Heart right ventricle (tissue), 16 donors: ENCODE measurements at regions of chr11 and their contacts with region 1.

Region 1: GRCh38 chr11:115324581-115325432 is 179.4 kb downstream of the CADM1 start:
- DNase-seq: peak in 1 of 2 donors; percentile 16
- ATAC-seq: peak; percentile 49 to 91 (median 71)
- H3K4me3 ChIP-seq: peak overlapping the region in 2 of 10 donors; percentile 17 to 22
- H3K27ac ChIP-seq: no peak overlapping the region
- H3K4me1 ChIP-seq: peaks cover 0 to 6% (median 0%) of the 10 kb centered on the region in 9 donors
- H3K27me3 ChIP-seq: no peaks in the 10 kb centered on the region
- CTCF ChIP-seq: peak; percentile 64 to 88 (median 78)

Region 2: DNA sequence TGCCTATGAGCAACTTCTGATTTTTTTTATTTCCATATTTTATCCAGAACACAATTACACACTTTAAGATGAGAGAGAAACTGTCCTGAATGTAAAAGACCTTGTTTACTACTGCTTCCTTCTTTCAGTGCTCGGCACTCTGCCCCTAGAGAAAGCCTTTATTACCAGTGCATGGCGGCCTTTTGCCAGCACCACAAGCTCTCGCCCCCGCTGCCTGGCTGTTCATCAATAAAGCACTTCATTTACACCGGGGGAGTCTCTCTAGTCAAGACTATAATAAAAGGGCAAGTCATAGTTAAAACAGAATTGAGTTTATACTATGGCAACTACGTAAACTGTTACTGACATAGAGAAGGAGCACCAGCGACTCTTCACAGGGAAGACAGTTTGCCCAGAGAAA is 80.0 kb before region 1 on chr11:
- intact Hi-C with region 1: no loop called
- DNase-seq: no peak
- ATAC-seq: peak in 1 of 8 donors; percentile 4
- H3K4me3 ChIP-seq: no peak overlapping the region
- H3K27ac ChIP-seq: no peak overlapping the region
- H3K4me1 ChIP-seq: peaks cover 0 to 8% (median 0%) of the 10 kb centered on the region in 9 donors
- H3K27me3 ChIP-seq: no peaks in the 10 kb centered on the region
- CTCF ChIP-seq: no peak

Region 3: GRCh38 chr11:116217006-116217405 is 892.2 kb after region 1 on chr11:
- intact Hi-C with region 1: loop called in 4 of 10 experiments (anchors 5 to 10 kb)
- DNase-seq: peak; percentile 21 to 35
- ATAC-seq: peak in 3 of 8 donors; percentile 35 to 71 (median 55)
- H3K4me3 ChIP-seq: no peak overlapping the region
- H3K27ac ChIP-seq: no peak overlapping the region
- H3K4me1 ChIP-seq: peaks cover 0 to 7% (median 0%) of the 10 kb centered on the region in 9 donors
- H3K27me3 ChIP-seq: peaks cover 0 to 3% (median 0%) of the 10 kb centered on the region in 7 donors
- CTCF ChIP-seq: peak; percentile 32 to 80 (median 60)

Region 4: GRCh38 chr11:116224154-116224888 is 899.5 kb after region 1 on chr11:
- intact Hi-C with region 1: loop called in 4 of 10 experiments (anchors 5 to 10 kb)
- DNase-seq: peak in 1 of 2 donors; percentile 46
- ATAC-seq: peak in 3 of 8 donors; percentile 24 to 61 (median 51)
- H3K4me3 ChIP-seq: no peak overlapping the region
- H3K27ac ChIP-seq: no peak overlapping the region
- H3K4me1 ChIP-seq: peaks cover 0 to 10% (median 0%) of the 10 kb centered on the region in 9 donors
- H3K27me3 ChIP-seq: peaks cover 0 to 20% (median 4%) of the 10 kb centered on the region in 7 donors
- CTCF ChIP-seq: peak; percentile 41 to 77 (median 67)